Panc1 (cell line): ENCODE measurements at regions of chr17 and their contacts with region 1.

Region 1: GRCh38 chr17:27635275-27635823 is 4.4 kb downstream of the LGALS9 start:
- DNase-seq: no peak
- ATAC-seq: no peak
- H3K4me3 ChIP-seq: no peak overlapping the region
- H3K27ac ChIP-seq: no peak overlapping the region
- H3K4me1 ChIP-seq: no peaks in the 10 kb centered on the region
- H3K27me3 ChIP-seq: no peaks in the 10 kb centered on the region
- CTCF ChIP-seq: no peak

Region 2: GRCh38 chr17:27381007-27381501 is 254.3 kb before region 1 on chr17:
- CTCF ChIA-PET with region 1: no interaction called
- POLR2A ChIA-PET with region 1: interaction called, 12 read pairs
- in situ Hi-C with region 1: no loop called
- intact Hi-C with region 1: no loop called
- DNase-seq: no peak
- ATAC-seq: peak; percentile 77
- H3K4me3 ChIP-seq: peak overlapping the region; percentile 27 to 45
- H3K27ac ChIP-seq: no peak overlapping the region
- H3K4me1 ChIP-seq: peaks cover 24% of the 10 kb centered on the region
- H3K27me3 ChIP-seq: no peaks in the 10 kb centered on the region
- CTCF ChIP-seq: peak; percentile 100

Region 3: GRCh38 chr17:27552469-27552779 is 82.9 kb before region 1 on chr17:
- CTCF ChIA-PET with region 1: no interaction called
- POLR2A ChIA-PET with region 1: no interaction called
- in situ Hi-C with region 1: no loop called
- intact Hi-C with region 1: no loop called
- DNase-seq: no peak
- ATAC-seq: peak; percentile 91
- H3K4me3 ChIP-seq: no peak overlapping the region
- H3K27ac ChIP-seq: peak overlapping the region; percentile 52
- H3K4me1 ChIP-seq: peaks cover 26% of the 10 kb centered on the region
- H3K27me3 ChIP-seq: no peaks in the 10 kb centered on the region
- CTCF ChIP-seq: no peak

Region 4: DNA sequence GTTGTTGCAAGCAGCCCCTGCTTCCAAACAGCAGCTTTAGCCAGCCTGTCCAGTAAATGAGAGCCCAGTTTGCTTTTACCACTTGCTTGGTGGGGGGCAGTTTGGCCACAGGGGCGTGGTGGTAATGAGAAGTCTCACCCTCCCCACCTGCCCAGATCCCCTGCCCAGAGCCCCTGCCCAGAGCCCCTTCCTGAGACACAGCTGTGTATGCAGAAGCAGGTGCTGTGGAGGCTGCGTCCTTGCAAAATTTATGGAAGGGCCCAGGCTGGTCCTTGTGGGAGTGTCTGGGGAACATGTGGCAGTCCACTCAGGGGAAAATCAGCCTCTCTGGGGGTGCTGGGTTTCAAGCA is 32.0 kb before region 1 on chr17:
- CTCF ChIA-PET with region 1: no interaction called
- POLR2A ChIA-PET with region 1: no interaction called
- in situ Hi-C with region 1: no loop called
- intact Hi-C with region 1: no loop called
- DNase-seq: no peak
- ATAC-seq: no peak
- H3K4me3 ChIP-seq: no peak overlapping the region
- H3K27ac ChIP-seq: no peak overlapping the region
- H3K4me1 ChIP-seq: no peaks in the 10 kb centered on the region
- H3K27me3 ChIP-seq: no peaks in the 10 kb centered on the region
- CTCF ChIP-seq: peak; percentile 75

Region 5: GRCh38 chr17:27666831-27667560 is 31.6 kb after region 1 on chr17:
- CTCF ChIA-PET with region 1: no interaction called
- POLR2A ChIA-PET with region 1: no interaction called
- in situ Hi-C with region 1: no loop called
- intact Hi-C with region 1: no loop called
- DNase-seq: no peak
- ATAC-seq: no peak
- H3K4me3 ChIP-seq: no peak overlapping the region
- H3K27ac ChIP-seq: no peak overlapping the region
- H3K4me1 ChIP-seq: no peaks in the 10 kb centered on the region
- H3K27me3 ChIP-seq: no peaks in the 10 kb centered on the region
- CTCF ChIP-seq: no peak

Region 6: GRCh38 chr17:27721797-27722196 is 86.4 kb after region 1 on chr17:
- CTCF ChIA-PET with region 1: no interaction called
- POLR2A ChIA-PET with region 1: no interaction called
- in situ Hi-C with region 1: no loop called
- intact Hi-C with region 1: no loop called
- DNase-seq: no peak
- ATAC-seq: no peak
- H3K4me3 ChIP-seq: no peak overlapping the region
- H3K27ac ChIP-seq: no peak overlapping the region
- H3K4me1 ChIP-seq: no peaks in the 10 kb centered on the region
- H3K27me3 ChIP-seq: peaks cover 2% of the 10 kb centered on the region; the same call in 1 of the 2 replicates
- CTCF ChIP-seq: no peak